ENCODE measurements at regions of chr13 and their contacts with region 1.

Region 1: GRCh38 chr13:67229481-67230403 is at the start of gene PCDH9:
- DNase-seq: peak; percentile 11
- ATAC-seq: no peak
- H3K4me3 Mint-ChIP-seq: no peak within 1 kb of the TSS
- H3K27ac Mint-ChIP-seq: peak within 1 kb of the TSS; percentile 24
- H3K4me1 Mint-ChIP-seq: peaks cover 6% of the 10 kb centered on the region
- H3K27me3 Mint-ChIP-seq: peaks cover 14% of the 10 kb centered on the region
- total RNA-seq, gene PCDH9: 0.14 to 0.21 TPM

Region 2: DNA sequence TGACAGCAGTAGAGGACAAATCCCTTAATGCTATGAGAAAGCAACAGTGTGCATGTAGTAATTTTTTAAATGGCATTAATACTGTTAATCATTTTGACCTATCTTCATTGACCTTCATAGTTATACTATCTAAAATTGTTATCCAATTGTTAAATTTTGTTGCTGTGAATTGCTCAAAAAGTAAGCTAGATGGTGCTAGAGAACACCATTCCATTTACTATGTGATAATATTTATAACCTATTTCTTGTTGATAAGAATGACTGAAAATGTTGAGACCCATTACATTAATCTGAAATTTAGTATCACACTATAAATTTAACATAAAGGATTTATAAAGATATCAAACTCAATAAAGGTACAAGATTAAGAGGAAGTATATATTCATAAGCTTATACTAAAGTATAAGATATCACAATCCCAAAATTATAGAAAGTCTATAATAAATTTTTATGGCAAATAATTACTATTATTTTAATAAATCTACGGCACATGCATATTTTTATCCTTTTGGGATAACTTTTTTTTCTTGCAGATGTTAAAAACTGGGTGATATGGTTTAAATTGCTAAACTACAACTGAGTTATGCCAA is 1572.9 kb before region 1 on chr13:
- CTCF ChIA-PET with region 1: no interaction called
- POLR2A ChIA-PET with region 1: no interaction called
- intact Hi-C with region 1: loop called in 1 of 2 experiments (anchors 5 kb)
- DNase-seq: no peak
- ATAC-seq: no peak
- H3K4me3 Mint-ChIP-seq: no peak overlapping the region
- H3K27ac Mint-ChIP-seq: no peak overlapping the region
- H3K4me1 Mint-ChIP-seq: no peaks in the 10 kb centered on the region
- H3K27me3 Mint-ChIP-seq: no peaks in the 10 kb centered on the region